HepG2 (cell line): ENCODE measurements at regions of chr6 and their contacts with region 1.

Region 1: DNA sequence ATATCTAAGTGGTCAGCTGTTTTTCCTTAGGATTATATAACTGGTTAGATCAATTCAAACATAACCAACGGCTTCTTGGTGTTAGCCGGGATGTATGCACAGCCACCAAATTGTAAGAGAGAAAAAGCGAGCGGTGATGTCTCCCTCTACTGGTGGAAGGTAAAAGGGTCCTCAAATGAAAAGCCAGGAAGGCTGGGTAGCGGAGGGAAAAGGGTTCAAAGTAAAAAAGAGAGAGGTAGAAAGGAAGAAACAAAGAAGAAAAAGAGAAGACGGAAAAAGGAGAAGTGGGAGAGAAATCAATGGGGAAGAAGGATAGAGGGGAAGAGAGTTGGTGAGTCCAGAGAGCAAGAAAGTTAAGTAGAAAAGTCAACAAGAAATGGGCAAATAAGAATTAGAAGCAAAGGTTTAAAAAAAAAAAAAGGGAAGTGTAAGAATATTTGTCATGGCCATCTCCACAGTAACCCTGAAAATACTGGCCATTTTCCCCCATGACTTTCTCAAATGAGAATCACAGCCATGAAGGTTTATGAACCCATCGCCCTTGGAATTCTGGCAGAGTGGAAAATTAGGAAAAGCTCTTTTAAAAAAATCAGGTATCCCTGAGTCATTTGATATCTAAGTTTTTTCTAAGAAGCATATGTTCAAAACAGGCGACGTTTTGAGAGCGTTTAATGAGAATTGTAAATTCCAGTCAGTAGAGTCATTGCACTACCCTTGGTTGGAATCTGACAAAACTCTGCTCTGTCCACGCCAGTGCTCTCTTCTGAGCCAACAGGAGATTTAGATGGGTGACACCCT is 155.6 kb upstream of the SNX9 start:
- DNase-seq: peak; percentile 58
- ATAC-seq: peak; percentile 62
- H3K4me3 ChIP-seq: no peak overlapping the region
- H3K27ac ChIP-seq: no peak overlapping the region
- H3K4me1 ChIP-seq: peaks cover 27% of the 10 kb centered on the region
- H3K27me3 ChIP-seq: no peaks in the 10 kb centered on the region
- CTCF ChIP-seq: peak; percentile 86
- EP300 ChIP-seq: no peak; a peak in 1 of 4 replicates
- POLR2A ChIP-seq: no peak
- RAD21 ChIP-seq: peak; percentile 78

Region 2: GRCh38 chr6:157314705-157315321 is 352.6 kb before region 1 on chr6:
- CTCF ChIA-PET with region 1: interaction called, 37 read pairs
- POLR2A ChIA-PET with region 1: no interaction called
- in situ Hi-C with region 1: loop called (anchors 10 kb)
- intact Hi-C with region 1: loop called (anchors 1 kb)
- DNase-seq: peak; percentile 76
- ATAC-seq: peak; percentile 87
- H3K4me3 ChIP-seq: no peak overlapping the region
- H3K27ac ChIP-seq: no peak overlapping the region
- H3K4me1 ChIP-seq: peaks cover 8% of the 10 kb centered on the region; the same call in 1 of the 2 replicates
- H3K27me3 ChIP-seq: no peaks in the 10 kb centered on the region
- CTCF ChIP-seq: peak; percentile 83
- EP300 ChIP-seq: no peak
- POLR2A ChIP-seq: no peak
- RAD21 ChIP-seq: peak; percentile 91

Region 3: DNA sequence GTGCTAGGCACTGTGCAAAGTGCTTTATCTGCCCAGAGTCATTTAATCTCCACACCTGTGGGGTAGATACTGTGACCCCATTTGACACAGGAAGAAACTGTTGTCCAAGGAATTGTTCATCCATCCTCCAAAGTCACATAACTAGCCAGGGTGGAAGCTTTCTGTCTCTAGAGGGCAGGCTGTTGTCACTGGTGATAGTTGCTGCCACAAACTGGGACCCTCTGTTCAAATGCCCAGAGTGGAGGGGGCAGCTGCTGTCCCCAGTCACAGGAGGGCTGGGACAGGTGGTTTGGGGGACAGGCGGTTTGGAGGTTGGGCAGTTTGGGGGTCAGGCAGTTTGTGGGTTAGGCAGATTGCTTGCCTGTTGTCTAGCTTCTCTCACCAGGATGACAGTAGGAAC is 328.0 kb before region 1 on chr6:
- CTCF ChIA-PET with region 1: interaction called, 3 read pairs
- POLR2A ChIA-PET with region 1: no interaction called
- in situ Hi-C with region 1: no loop called
- intact Hi-C with region 1: loop called (anchors 5 kb)
- DNase-seq: no peak
- ATAC-seq: peak; percentile 68
- H3K4me3 ChIP-seq: no peak overlapping the region
- H3K27ac ChIP-seq: no peak overlapping the region
- H3K4me1 ChIP-seq: peaks cover 15% of the 10 kb centered on the region
- H3K27me3 ChIP-seq: peaks cover 0 to 5% of the 10 kb centered on the region in 2 experiments; a peak in 3 of 5 replicates
- CTCF ChIP-seq: peak; percentile 81
- EP300 ChIP-seq: no peak
- POLR2A ChIP-seq: no peak
- RAD21 ChIP-seq: peak; percentile 62; the same call in 1 of the 2 replicates

Region 4: DNA sequence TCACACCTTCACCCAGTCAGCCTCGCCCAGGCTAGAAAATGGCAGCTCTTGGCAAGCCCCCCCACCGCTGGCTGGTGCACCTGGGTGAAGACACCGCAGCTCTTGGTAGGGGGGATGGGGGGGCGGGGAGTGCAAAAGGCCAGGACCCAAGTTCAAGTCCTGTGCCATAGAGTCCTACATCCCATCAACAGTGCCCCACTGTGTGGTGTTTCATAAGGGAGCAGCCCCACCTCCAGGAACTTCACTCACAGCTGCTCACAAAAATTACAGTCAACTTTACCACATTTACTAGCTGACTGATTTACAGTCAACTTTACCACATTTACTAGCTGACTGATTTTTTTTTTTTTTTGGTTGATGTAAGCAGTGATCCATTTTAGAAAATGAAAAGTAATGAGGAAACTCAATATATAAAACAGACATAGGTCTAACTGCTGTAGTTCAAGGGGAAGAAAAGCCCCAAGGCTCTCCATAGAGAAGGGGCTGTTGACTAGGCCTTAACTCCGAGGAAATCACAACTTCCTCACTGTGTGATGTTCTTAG is 53.3 kb before region 1 on chr6:
- CTCF ChIA-PET with region 1: no interaction called
- POLR2A ChIA-PET with region 1: no interaction called
- in situ Hi-C with region 1: no loop called
- intact Hi-C with region 1: loop called (anchors 2 kb)
- DNase-seq: peak; percentile 41
- ATAC-seq: peak; percentile 76
- H3K4me3 ChIP-seq: peak overlapping the region in 1 of 3 experiments; percentile 4; a peak in 1 of 6 replicates
- H3K27ac ChIP-seq: peak overlapping the region; percentile 68
- H3K4me1 ChIP-seq: peaks cover 37% of the 10 kb centered on the region
- H3K27me3 ChIP-seq: no peaks in the 10 kb centered on the region
- CTCF ChIP-seq: peak; percentile 85
- EP300 ChIP-seq: no peak
- POLR2A ChIP-seq: no peak
- RAD21 ChIP-seq: peak; percentile 57; the same call in 1 of the 2 replicates

Region 5: GRCh38 chr6:157756708-157757429 is 89.5 kb after region 1 on chr6:
- CTCF ChIA-PET with region 1: interaction called, 7 read pairs
- POLR2A ChIA-PET with region 1: interaction called, 3 read pairs
- in situ Hi-C with region 1: no loop called
- intact Hi-C with region 1: loop called (anchors 2 kb)
- DNase-seq: peak; percentile 81
- ATAC-seq: peak; percentile 95
- H3K4me3 ChIP-seq: peak overlapping the region in 2 of 3 experiments; percentile 4 to 34; a peak in 3 of 6 replicates
- H3K27ac ChIP-seq: no peak overlapping the region
- H3K4me1 ChIP-seq: peaks cover 57% of the 10 kb centered on the region
- H3K27me3 ChIP-seq: peaks cover 0 to 2% of the 10 kb centered on the region in 2 experiments; a peak in 1 of 5 replicates
- CTCF ChIP-seq: peak; percentile 95
- EP300 ChIP-seq: no peak; a peak in 1 of 4 replicates
- POLR2A ChIP-seq: no peak
- RAD21 ChIP-seq: peak; percentile 96